Ascending aorta (tissue), 2 donors: ENCODE measurements at regions of chr19 and their contacts with region 1.

Region 1: DNA sequence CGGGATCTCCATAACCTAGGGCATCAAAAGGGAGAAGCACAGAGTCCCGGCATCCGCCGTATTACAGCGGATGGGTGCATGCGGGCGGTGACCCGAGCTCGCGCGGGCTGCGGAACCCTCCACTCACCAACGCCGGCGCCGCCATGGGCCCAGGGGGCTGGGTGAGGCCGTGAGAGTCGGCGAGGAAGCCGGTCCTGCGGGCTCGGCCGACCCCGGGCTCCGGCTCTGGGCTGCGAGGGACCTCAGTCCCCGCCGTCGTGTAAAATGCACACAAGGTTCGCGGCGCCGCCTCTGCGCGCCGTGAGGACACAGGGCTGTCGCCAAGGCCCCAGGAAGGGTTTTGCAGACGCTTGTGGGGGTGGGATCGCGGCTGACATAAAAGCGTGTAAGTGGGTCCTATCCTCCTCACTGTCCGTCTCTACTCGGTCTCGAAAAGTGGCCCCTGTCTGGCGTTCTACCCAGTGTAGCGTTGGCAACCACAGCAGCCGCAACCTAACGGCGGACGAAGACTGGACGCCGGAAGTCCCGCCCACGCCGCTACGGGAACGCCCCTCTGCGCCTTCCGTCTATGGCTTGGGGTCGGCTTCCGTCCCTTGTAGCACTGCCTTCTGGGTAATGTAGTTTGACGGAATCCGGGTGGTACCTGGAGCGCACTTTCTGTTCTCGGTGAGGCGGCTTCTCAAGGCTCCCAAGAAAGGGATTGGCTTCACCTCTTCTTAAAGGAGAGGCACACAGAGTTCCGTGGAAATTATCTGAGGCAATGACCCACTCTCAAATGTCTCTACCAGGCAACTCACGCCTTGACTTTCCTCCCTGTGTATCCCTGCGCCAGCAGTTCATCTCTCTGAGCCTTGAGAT is at the start of gene ZNF599:
- DNase-seq: peak; percentile 57 to 94
- H3K4me3 ChIP-seq: peak within 1 kb of the TSS; percentile 80 to 89
- H3K27ac ChIP-seq: peak within 1 kb of the TSS; percentile 75 to 80
- H3K4me1 ChIP-seq: peaks cover 0 to 3% of the 10 kb centered on the region in 2 donors
- H3K27me3 ChIP-seq: no peaks in the 10 kb centered on the region
- CTCF ChIP-seq: no peak
- total RNA-seq, gene ZNF599: 2.2 TPM

Region 2: DNA sequence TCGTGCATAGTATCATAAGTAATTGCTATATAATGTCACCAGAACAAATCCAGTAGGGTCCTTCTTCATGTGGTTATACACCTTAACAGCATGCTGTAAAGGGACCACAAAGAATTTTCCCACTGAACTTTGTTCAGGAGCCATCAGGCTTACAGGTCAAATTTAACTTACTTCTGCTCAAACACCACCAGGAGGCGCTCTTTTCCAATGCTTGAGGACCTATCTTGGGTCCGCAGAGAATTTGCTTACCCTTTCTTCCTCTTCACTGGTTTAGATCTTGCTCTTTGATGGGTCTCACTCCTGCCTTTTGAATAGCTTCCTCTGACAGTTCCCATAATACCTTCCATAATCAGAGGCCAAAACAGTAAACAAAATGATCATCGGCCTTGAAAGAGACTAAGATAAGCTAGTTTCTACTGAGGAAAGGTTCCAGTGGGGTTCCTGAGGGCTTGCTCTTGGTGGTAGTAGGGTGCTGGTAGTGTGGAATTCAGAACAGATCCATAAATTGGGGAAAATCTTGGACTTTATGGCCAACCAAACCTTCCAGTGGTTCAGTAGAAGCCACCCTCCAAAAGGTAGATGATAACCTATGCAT is 133.3 kb before region 1 on chr19:
- intact Hi-C with region 1: no loop called
- DNase-seq: no peak
- H3K4me3 ChIP-seq: no peak overlapping the region
- H3K27ac ChIP-seq: no peak overlapping the region
- H3K4me1 ChIP-seq: no peaks in the 10 kb centered on the region
- H3K27me3 ChIP-seq: no peaks in the 10 kb centered on the region
- CTCF ChIP-seq: peak; percentile 43 to 77 (median 48)

Region 3: GRCh38 chr19:34677386-34678084 is 95.4 kb before region 1 on chr19 and contains the start of gene ZNF302:
- intact Hi-C with region 1: loop called (anchors 1 kb)
- DNase-seq: peak; percentile 86 to 98
- H3K4me3 ChIP-seq: peak within 1 kb of the TSS; percentile 83 to 85
- H3K27ac ChIP-seq: peak within 1 kb of the TSS; percentile 99
- H3K4me1 ChIP-seq: peaks cover 0 to 9% of the 10 kb centered on the region in 2 donors
- H3K27me3 ChIP-seq: no peaks in the 10 kb centered on the region
- CTCF ChIP-seq: no peak
- total RNA-seq, gene ZNF302: 42.0 TPM

Region 4: DNA sequence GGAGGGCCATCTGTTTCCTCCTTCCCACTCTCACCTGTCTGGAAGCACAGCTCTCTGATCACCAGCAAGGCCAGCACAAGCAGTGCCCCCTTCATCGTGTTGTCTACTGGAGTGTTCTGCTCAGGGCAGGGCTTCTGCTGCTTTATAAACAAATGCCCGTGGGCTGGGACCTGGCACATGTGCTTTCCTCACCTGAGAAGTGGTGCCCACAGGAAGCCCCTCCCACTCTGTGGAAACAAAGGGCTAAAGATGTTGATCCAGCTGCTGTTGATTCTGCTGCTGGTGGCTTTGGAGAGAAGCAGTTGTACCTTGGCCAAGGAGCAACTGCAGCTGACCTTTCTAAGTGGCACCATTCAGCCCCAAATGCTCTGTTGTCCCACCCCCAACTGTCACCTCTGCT is 65.3 kb before region 1 on chr19:
- intact Hi-C with region 1: no loop called
- DNase-seq: no peak
- H3K4me3 ChIP-seq: no peak overlapping the region
- H3K27ac ChIP-seq: no peak overlapping the region
- H3K4me1 ChIP-seq: no peaks in the 10 kb centered on the region
- H3K27me3 ChIP-seq: no peaks in the 10 kb centered on the region
- CTCF ChIP-seq: no peak

Region 5: GRCh38 chr19:34733826-34734600 is 38.9 kb before region 1 on chr19 and contains the start of gene ZNF181:
- intact Hi-C with region 1: loop called (anchors 1 kb)
- DNase-seq: peak; percentile 42 to 94
- H3K4me3 ChIP-seq: peak within 1 kb of the TSS; percentile 62 to 94
- H3K27ac ChIP-seq: peak within 1 kb of the TSS; percentile 97 to 98
- H3K4me1 ChIP-seq: peaks cover 9 to 22% of the 10 kb centered on the region in 2 donors
- H3K27me3 ChIP-seq: no peaks in the 10 kb centered on the region
- CTCF ChIP-seq: no peak
- total RNA-seq, gene ZNF181: 1.9 TPM

Region 6: GRCh38 chr19:34943861-34944573 is 171.1 kb after region 1 on chr19:
- intact Hi-C with region 1: no loop called
- DNase-seq: no peak
- H3K4me3 ChIP-seq: no peak overlapping the region
- H3K27ac ChIP-seq: no peak overlapping the region
- H3K4me1 ChIP-seq: no peaks in the 10 kb centered on the region
- H3K27me3 ChIP-seq: no peaks in the 10 kb centered on the region
- CTCF ChIP-seq: no peak

Region 7: GRCh38 chr19:35306473-35307246 is 533.7 kb after region 1 on chr19:
- intact Hi-C with region 1: no loop called
- DNase-seq: no peak
- H3K4me3 ChIP-seq: no peak overlapping the region
- H3K27ac ChIP-seq: no peak overlapping the region
- H3K4me1 ChIP-seq: no peaks in the 10 kb centered on the region
- H3K27me3 ChIP-seq: no peaks in the 10 kb centered on the region
- CTCF ChIP-seq: no peak